Right cardiac atrium (tissue), 5 donors: ENCODE measurements at regions of chr20 and their contacts with region 1.

Region 1: DNA sequence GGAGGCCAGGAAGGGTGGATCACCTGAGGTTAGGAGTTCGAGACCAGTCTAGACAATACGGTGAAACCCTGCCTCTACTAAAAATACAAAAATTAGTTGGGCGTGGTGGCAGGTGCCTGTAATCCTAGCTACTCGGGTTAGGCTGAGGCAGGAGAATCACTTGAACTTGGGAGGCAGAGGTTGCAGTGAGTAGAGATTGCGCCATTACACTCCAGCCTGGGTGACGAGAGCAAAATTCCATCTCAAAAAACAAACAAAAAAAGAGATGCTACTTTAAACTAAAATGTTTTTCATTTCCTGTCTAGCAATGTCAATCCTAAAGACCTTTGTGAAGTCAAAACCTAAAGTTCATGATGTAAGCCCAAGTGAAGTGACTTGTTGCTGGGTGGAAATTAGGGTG is 12.9 kb downstream of the DSN1 start:
- DNase-seq: no peak
- ATAC-seq: no peak
- H3K4me3 ChIP-seq: no peak overlapping the region
- H3K27ac ChIP-seq: no peak overlapping the region
- H3K4me1 ChIP-seq: no peaks in the 10 kb centered on the region
- H3K27me3 ChIP-seq: no peaks in the 10 kb centered on the region

Region 2: DNA sequence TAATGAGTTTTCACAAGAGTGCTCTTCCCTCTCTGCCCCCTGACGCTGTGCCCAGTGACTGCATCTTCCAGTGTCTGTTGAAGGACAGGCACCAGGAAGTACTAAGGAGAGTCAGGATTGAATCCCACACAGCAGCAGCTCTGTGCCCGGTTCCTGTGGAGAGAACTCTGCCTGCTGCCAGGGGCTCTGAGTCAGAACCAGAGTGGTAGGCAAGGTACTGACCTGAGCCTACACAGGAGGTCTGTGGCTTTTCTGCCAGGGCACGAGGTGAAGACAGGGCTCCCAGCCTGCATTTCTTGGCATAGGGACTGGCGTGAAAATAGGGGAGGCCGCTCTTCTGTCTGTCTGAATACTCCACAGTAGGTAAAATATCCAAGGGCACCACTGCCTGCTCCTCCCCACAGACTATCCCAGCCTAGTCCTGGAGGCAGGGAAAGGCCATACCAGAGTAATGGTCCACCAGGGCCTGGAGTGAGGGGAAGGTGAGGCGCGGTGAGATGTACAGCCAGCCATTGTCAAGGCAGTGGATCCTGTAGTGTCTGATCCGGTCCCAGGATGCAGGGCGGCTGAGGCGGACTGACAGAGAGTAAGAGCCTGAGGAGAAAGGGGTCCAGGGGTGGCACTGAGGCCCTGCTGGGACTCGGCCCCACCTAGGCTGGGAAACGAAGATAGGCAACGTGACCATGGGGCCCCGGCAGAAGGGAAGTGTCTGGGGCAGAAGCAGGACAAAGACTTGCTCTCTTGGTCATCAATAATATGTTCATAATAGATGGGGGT is 145.7 kb before region 1 on chr20:
- intact Hi-C with region 1: loop called in 1 of 4 experiments (anchors 5 kb)
- DNase-seq: no peak
- ATAC-seq: no peak
- H3K4me3 ChIP-seq: no peak overlapping the region
- H3K27ac ChIP-seq: no peak overlapping the region
- H3K4me1 ChIP-seq: no peaks in the 10 kb centered on the region
- H3K27me3 ChIP-seq: no peaks in the 10 kb centered on the region